ENCODE measurements at regions of chr11 and their contacts with region 1.

Region 1: GRCh38 chr11:31397239-31397834 is 27.7 kb downstream of the DNAJC24 start:
- DNase-seq: no peak
- H3K4me3 ChIP-seq: no peak overlapping the region
- H3K27ac ChIP-seq: no peak overlapping the region
- H3K27me3 ChIP-seq: no peaks in the 10 kb centered on the region
- CTCF ChIP-seq: peak; percentile 37 to 86 (median 66)

Region 2: DNA sequence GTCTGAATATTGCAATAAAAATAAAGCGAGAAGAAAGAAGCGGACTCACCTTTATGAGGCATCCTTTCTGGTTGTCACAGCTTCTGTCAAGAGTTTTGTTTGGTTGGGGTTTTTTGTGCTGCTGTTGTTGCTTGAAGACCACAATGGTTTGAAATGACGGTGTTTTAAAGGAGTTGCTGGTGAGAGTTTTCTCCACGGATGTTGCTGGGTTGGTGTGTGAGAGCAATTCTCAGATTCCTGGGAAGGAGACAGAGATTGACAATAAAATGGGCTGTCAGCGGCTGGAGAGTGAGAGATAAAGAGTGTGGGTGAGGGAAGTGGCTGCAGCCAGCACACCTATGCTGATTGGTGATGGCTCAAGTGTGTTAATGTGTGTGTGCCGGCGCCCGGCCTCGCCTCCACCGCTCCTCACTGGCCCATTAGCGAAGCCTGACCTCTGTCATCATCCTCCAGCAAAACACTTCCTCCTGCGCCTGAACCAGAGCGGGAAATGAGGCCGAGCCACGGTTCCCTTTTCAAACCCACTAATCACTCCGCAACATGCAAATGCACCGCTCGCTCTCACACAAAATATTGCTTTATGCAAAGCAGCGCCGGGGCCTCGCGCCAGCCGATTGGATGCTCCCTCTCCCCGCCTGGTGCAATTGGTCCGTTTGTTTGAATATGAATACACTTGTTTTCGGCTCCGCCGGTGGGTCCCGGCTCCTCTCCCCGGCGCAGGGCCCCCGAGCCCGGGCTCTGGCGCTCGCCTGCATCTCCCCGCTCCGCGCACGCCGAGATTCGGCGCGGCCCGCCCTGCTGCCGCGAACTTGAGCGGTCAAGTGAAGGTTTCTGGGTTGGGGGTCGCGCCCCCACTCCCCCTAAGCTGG is 413.7 kb after region 1 on chr11 and contains the start of gene PAX6:
- intact Hi-C with region 1: loop called in 1 of 2 experiments (anchors 10 kb)
- DNase-seq: peak in 7 of 10 donors; percentile 58 to 97 (median 75)
- H3K4me3 ChIP-seq: peak within 1 kb of the TSS; percentile 35 to 77 (median 57)
- H3K27ac ChIP-seq: peak within 1 kb of the TSS in 50 of 59 donors; percentile 16 to 93 (median 64)
- H3K27me3 ChIP-seq: peaks cover 8 to 98% (median 91%) of the 10 kb centered on the region in 45 donors
- CTCF ChIP-seq: no peak
- total RNA-seq, gene PAX6: 12.4 to 107 (median 33.7) TPM

Region 3: GRCh38 chr11:31870609-31871309 is 473.4 kb after region 1 on chr11:
- intact Hi-C with region 1: loop called in 1 of 2 experiments (anchors 2 kb)
- DNase-seq: peak in 4 of 10 donors; percentile 33 to 48 (median 46)
- H3K4me3 ChIP-seq: no peak overlapping the region
- H3K27ac ChIP-seq: no peak overlapping the region
- H3K27me3 ChIP-seq: peaks cover 0 to 23% (median 5%) of the 10 kb centered on the region in 45 donors
- CTCF ChIP-seq: peak in 53 of 56 donors; percentile 18 to 75 (median 51)

Region 4: GRCh38 chr11:31958076-31958735 is 560.9 kb after region 1 on chr11:
- intact Hi-C with region 1: loop called in 1 of 2 experiments (anchors 5 kb)
- DNase-seq: peak in 8 of 10 donors; percentile 32 to 75 (median 48)
- H3K4me3 ChIP-seq: no peak overlapping the region
- H3K27ac ChIP-seq: no peak overlapping the region
- H3K27me3 ChIP-seq: no peaks in the 10 kb centered on the region
- CTCF ChIP-seq: peak; percentile 28 to 83 (median 66)

Measured in dorsolateral prefrontal cortex (tissue), 120 donors.